Activated CD4-positive, alpha-beta memory T cell treated with anti-CD3 and anti-CD28 coated beads, Interleukin-2, amount 10 ng/mL, durations not matched to agents 7 days and 5 days (primary cell): ENCODE measurements at regions of chr3 and their contacts with region 1.

Region 1: DNA sequence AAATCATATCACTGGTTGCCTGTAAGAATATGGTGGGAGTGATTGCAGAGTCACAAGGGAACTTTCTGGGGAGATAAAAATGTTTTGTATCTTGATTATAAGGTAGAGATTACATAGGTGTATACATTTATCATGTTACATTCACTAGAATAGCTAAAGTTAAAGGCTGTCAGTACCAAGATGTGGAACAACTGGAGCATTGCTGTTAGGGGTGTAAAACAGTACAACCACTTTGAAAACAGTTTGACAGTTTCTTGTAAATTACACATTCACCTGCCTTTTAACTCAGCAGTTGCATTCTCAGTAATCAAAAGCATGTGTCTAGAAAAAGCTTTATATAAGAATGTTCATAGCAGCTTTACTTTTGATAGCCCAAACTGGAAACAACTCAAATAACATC is 27.6 kb downstream of the RASA2 start:
- DNase-seq: no peak
- H3K4me3 Mint-ChIP-seq: no peak overlapping the region
- H3K27ac Mint-ChIP-seq: no peak overlapping the region
- H3K4me1 Mint-ChIP-seq: peaks cover 28% of the 10 kb centered on the region
- H3K27me3 Mint-ChIP-seq: no peaks in the 10 kb centered on the region

Region 2: DNA sequence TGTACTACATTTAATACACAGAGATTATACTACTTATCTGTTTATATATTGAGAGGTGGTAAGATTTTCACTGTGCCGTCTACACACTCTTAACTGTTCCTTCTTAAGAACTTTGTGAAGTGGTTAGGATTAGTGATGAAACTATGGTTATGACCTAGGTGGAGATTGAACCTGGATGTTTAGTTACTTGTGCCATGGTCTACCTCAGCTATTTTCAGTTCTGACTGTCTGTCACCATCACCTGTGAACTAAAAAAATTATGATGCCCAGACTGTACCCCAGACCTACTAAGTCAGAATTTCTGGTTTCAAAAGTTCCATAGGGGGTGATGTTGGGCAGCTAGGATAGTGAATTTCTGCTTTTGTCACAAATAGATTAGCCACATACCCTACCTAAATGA is 21.2 kb before region 1 on chr3:
- CTCF ChIA-PET with region 1: no interaction called
- POLR2A ChIA-PET with region 1: interaction called, 12 read pairs
- DNase-seq: no peak
- H3K4me3 Mint-ChIP-seq: no peak overlapping the region
- H3K27ac Mint-ChIP-seq: peak overlapping the region; percentile 33
- H3K4me1 Mint-ChIP-seq: peaks cover 86% of the 10 kb centered on the region
- H3K27me3 Mint-ChIP-seq: no peaks in the 10 kb centered on the region